AG04449 (cell line): ENCODE measurements at regions of chr22 and their contacts with region 1.

Region 1: DNA sequence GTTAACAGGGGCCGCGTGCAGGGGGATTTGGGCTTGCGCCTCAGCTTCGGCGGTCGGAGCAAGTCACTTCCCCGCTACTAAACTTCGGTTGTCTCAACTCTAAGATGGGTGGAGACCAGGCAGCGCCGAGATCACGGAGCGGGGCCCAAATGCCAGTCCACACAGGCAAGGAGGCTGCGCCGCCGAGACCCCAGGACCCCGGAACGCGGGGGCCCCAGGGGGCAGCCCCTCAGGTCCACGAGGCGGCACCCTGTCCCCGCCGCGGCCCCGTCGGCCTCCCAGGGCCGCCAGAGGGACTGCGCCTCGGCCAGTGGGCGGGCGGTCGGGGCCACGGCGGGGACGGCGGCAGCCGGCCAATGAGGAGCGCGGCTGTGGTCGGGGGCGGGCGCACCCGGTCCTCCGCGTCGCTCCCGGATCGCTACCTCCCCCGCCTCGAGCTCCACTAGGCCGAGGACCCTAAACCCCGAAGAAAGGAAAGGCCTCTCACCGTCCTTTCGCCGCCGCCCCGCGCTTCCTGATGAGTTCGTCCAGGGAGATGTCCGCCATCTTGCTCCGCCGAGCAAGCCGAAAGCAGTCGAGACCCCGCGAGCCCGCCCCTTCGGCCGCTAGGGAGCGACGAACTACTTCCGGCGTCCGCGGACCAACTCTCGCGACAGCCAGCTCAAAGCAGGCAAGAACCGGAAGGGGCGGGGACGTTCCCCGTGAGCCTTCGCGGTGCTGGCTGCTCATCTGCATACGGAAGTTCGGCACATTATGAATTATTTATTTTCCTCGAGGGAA is at the start of gene POLDIP3:
- DNase-seq: peak; percentile 79
- H3K4me3 ChIP-seq: peak within 1 kb of the TSS; percentile 80
- CTCF ChIP-seq: peak; percentile 52

Region 2: DNA sequence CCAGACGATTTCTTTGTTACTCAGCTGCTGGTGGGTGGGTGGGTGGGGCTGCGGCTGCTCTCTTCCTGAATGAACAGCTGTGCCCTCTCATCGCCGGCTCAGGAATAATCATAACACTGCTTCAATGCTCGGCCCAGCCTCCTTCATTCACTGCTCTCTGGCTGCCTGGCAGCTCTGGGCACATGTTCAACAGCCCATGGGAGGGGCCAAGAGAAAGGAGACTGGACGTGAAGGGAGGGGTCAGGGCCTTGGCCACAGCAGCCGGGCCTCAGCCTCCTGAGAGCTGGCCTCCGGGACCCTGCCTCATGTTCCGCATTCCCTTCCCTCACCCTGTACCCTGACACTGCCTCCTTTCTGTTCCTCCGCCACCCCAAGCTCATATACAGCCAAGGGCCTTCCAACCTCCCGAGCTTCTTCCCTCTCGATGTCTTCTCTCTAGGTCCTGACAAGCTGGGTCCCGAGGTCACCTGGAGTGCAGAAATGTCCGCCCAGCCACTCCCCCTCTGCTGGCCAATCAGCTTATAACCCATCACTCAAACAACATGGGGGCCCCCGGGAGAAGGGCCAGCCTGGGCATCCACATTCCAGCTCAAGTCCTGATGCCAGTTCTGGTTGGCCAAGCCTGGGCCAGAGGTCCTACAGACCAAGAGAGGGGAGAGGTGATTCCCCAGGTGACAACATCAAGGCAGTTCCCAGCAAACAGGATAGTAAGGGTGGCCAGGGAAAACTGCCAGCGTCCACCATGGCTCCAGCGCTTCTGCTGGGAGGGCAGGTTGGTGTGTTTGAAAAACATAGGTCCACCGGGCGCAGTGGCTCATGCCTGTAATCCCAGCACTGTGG is 1056.9 kb before region 1 on chr22:
- CTCF ChIA-PET with region 1: no interaction called
- POLR2A ChIA-PET with region 1: no interaction called
- DNase-seq: no peak
- H3K4me3 ChIP-seq: no peak overlapping the region
- CTCF ChIP-seq: no peak

Region 3: DNA sequence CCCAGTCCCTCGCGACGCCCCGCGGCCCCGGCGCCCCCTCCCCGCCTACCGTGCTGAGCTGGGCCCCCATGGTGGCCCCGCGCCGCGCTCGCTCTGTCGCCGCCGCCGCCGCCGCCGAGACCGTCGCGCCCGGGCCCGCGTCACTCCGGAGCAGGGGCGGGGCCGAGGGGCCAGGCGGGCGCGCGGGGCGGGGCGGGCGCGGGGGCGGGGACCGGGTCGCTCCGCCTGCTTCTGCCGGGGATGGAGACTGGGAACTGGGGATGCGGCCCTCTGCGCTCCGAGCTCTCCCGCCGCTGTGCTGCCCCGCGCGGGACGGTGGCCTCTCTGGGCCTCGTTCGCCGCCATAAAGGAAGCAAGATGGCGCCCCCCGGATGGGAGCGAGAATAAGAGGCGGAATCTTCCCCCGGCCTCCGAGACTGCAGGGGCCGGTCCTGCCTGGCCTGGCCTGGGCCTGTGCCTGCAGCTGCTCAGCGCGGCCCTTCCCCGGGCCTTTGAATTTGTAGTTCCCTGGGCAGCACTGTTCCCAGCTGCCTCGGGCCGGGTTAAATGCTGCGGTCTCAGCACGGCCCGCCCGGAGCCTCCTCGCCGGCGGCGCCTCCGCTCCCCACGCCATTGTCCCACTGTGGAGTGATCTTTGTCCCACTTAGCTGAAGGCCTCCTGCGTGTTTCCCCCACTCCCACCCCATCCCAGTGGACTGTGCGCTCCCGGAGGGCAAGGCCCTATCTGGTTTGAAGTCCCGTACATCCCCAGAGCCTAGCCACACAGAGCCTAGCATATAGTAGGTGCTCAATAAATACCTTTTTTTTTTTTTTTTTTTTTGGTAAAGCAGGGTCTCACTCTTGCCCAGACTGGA is 35.0 kb after region 1 on chr22 and contains the start of gene CYB5R3:
- CTCF ChIA-PET with region 1: no interaction called
- POLR2A ChIA-PET with region 1: interaction called, 15 read pairs
- DNase-seq: no peak
- H3K4me3 ChIP-seq: peak within 1 kb of the TSS; percentile 91
- CTCF ChIP-seq: peak; percentile 17

Region 4: DNA sequence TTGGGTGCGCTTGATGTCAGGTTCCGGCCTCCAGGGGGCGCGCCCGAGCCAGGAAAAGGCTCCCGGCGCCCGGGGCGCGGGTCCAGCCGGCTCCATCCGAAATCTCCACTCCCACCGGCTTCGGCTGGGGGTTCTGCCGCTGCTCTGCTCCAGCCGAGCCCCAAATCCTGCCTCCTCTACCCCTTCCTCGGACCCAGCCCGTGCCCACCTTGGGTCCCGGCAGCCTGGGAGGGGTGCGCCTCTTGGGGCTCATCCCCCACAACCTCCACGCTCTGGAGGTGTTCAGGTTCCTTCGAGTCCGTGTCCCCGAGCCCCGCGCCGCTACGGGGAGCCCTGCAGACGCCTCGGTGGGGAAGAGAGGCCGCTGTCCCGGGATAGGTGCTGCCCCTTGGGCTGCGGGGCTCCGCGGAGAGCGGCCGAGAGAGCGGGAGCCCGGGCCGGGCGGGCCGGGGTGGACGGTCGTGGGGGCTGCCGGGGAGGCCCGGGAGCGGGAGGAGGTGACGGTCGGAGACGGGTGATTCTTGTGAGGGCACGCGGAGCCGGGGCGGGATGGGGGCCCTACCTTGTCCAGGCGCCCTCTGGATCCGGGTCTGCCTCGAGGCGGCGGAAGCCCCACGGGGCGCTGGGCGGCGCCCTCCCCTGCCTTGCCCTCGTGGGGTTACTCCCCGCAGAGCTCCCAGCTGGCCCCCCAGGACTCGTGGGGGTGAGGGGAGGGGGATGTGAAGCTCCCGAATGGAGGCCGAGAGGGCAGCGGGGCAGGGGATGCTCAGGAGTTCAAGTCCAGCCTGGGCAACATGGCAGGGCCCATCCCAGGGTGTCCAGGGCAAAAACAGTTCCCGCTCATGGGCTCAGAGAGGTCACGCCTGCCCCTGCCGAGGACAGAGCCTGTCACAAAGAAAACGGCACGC is 47.9 kb after region 1 on chr22:
- CTCF ChIA-PET with region 1: no interaction called
- POLR2A ChIA-PET with region 1: no interaction called
- DNase-seq: no peak
- H3K4me3 ChIP-seq: peak overlapping the region; percentile 68
- CTCF ChIP-seq: peak; percentile 77